Activated CD4-positive, alpha-beta T cell treated with anti-CD3 and anti-CD28 coated beads for 36 hours (primary cell): ENCODE measurements at regions of chrX and their contacts with region 1.

Region 1: DNA sequence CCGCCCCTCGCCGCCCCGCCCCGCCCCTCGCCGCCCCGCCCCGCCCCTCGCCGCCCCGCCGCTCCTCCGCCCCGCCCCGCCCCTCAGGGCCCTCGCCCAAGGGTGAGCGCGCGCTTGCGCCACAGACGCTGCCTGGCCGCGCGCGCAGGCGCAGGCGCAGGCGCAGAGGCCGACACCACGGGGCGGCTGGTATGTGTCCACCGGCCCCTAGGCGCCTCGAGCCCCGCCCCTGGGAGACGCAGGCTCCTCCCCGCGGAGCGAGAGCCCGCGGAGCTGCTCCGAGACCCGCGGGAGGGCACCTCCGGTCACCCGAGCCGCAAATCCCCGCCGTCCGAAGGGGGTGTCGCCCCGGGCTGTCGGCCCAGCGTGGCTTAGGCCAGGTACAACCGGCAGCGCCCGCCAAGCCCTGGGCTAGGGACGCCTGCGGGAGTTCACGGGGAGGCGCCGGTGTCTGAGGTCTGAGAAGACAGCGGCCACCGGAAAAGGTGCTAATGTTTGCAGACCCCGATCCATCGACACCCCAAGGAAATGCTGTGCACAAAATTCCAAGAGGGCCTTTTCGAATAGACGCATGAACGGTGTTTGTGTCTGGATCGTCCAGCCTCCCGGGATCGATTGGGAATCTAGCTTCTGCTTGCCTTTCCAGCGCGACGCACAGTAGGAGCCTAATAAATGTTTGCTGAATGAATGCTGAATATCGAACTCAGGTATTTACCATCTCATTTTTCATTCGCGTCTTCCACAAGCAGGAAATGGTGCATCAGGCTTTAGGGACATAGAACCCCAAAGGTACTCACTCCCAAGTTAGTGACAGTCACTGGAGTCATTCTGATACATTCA is 473 bp upstream of the CCNQ start:
- DNase-seq: peak; percentile 92
- ATAC-seq: peak; percentile 94
- H3K4me3 Mint-ChIP-seq: peak overlapping the region; percentile 81
- H3K27ac Mint-ChIP-seq: peak overlapping the region; percentile 72
- H3K4me1 Mint-ChIP-seq: peaks cover 35% of the 10 kb centered on the region
- H3K27me3 Mint-ChIP-seq: no peaks in the 10 kb centered on the region

Region 2: GRCh38 chrX:152958524-152959465 is 640.6 kb before region 1 on chrX:
- CTCF ChIA-PET with region 1: no interaction called
- POLR2A ChIA-PET with region 1: no interaction called
- intact Hi-C with region 1: loop called in 1 of 2 experiments (anchors 2 kb)
- DNase-seq: peak; percentile 91
- ATAC-seq: peak; percentile 98
- H3K4me3 Mint-ChIP-seq: peak overlapping the region; percentile 52
- H3K27ac Mint-ChIP-seq: peak overlapping the region; percentile 91
- H3K4me1 Mint-ChIP-seq: peaks cover 6% of the 10 kb centered on the region
- H3K27me3 Mint-ChIP-seq: no peaks in the 10 kb centered on the region

Region 3: DNA sequence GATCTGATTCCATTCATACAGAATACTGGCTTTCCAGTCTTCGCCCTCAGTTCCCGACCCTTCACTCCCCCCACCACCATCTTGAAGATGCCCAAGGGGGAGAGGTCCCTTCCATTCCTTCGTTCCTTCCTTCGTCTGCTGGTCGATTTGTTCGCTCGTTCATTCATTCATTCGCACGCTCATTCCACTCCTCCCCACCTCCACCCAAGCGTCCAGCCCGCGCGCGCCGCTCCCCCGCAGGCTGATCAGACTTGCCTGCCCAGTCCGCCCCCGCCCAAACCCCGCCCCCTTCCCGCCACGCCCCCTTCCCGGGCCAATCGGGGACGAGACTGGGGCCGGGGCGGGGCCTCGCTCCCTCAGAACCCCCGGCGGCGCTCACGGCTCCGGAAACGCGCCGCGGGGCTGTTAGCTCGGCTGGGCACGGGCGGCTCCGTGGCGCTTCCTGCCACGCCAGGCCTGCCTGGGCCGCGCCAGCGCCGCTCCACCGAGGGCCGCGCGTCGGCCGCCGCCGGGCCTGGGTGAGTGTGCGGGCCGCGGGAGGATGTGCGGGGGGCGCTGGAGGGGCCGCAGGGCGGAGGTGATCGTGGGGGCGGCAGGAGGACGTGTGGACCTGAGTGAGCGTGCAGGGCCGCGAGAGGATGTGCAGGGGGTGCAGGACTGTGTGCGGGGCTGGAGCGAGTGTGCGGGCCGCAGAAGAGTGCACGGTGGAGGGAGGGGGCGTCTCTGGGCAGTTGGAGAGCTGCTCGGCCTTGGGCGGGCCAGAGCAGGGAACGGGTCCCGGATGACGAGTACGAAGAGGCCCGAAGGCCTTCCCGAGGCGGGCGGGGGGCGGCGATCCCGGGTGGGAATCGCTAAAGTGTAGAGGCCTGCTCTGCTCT is 265.4 kb before region 1 on chrX and contains the start of gene ZNF275:
- CTCF ChIA-PET with region 1: interaction called, 3 read pairs
- POLR2A ChIA-PET with region 1: no interaction called
- intact Hi-C with region 1: loop called in 1 of 2 experiments (anchors 5 kb)
- DNase-seq: peak; percentile 87
- ATAC-seq: peak; percentile 93
- H3K4me3 Mint-ChIP-seq: peak within 1 kb of the TSS; percentile 80
- H3K27ac Mint-ChIP-seq: peak within 1 kb of the TSS; percentile 81
- H3K4me1 Mint-ChIP-seq: peaks cover 45% of the 10 kb centered on the region
- H3K27me3 Mint-ChIP-seq: no peaks in the 10 kb centered on the region
- total RNA-seq, gene ZNF275: 11.5 to 13.4 TPM

Region 4: GRCh38 chrX:153582896-153583295 is 16.5 kb before region 1 on chrX:
- CTCF ChIA-PET with region 1: interaction called, 5 read pairs
- POLR2A ChIA-PET with region 1: interaction called, 5 read pairs
- intact Hi-C with region 1: loop called (anchors 1 to 2 kb)
- DNase-seq: peak; percentile 81
- ATAC-seq: peak; percentile 100
- H3K4me3 Mint-ChIP-seq: peak overlapping the region; percentile 10
- H3K27ac Mint-ChIP-seq: peak overlapping the region; percentile 51
- H3K4me1 Mint-ChIP-seq: peaks cover 19% of the 10 kb centered on the region
- H3K27me3 Mint-ChIP-seq: no peaks in the 10 kb centered on the region

Region 5: GRCh38 chrX:153609917-153610428 is 10.6 kb after region 1 on chrX:
- CTCF ChIA-PET with region 1: interaction called, 18 read pairs
- POLR2A ChIA-PET with region 1: interaction called, 5 read pairs
- intact Hi-C with region 1: loop called in 1 of 2 experiments (anchors 1 kb)
- DNase-seq: peak; percentile 85
- ATAC-seq: peak; percentile 91
- H3K4me3 Mint-ChIP-seq: peak overlapping the region; percentile 62
- H3K27ac Mint-ChIP-seq: peak overlapping the region; percentile 73
- H3K4me1 Mint-ChIP-seq: peaks cover 13% of the 10 kb centered on the region
- H3K27me3 Mint-ChIP-seq: no peaks in the 10 kb centered on the region

Region 6: GRCh38 chrX:153724252-153725040 is 125.0 kb after region 1 on chrX and contains the starts of genes ABCD1 and BCAP31:
- CTCF ChIA-PET with region 1: no interaction called
- POLR2A ChIA-PET with region 1: no interaction called
- intact Hi-C with region 1: loop called in 1 of 2 experiments (anchors 1 kb)
- DNase-seq: peak; percentile 93
- ATAC-seq: peak; percentile 84
- H3K4me3 Mint-ChIP-seq: peak within 1 kb of the TSS; percentile 89
- H3K27ac Mint-ChIP-seq: peak within 1 kb of the TSS; percentile 87
- H3K4me1 Mint-ChIP-seq: peaks cover 20% of the 10 kb centered on the region
- H3K27me3 Mint-ChIP-seq: no peaks in the 10 kb centered on the region
- total RNA-seq, gene ABCD1: 4.5 to 4.8 TPM
- total RNA-seq, gene BCAP31: 78.0 to 106 TPM

Region 7: DNA sequence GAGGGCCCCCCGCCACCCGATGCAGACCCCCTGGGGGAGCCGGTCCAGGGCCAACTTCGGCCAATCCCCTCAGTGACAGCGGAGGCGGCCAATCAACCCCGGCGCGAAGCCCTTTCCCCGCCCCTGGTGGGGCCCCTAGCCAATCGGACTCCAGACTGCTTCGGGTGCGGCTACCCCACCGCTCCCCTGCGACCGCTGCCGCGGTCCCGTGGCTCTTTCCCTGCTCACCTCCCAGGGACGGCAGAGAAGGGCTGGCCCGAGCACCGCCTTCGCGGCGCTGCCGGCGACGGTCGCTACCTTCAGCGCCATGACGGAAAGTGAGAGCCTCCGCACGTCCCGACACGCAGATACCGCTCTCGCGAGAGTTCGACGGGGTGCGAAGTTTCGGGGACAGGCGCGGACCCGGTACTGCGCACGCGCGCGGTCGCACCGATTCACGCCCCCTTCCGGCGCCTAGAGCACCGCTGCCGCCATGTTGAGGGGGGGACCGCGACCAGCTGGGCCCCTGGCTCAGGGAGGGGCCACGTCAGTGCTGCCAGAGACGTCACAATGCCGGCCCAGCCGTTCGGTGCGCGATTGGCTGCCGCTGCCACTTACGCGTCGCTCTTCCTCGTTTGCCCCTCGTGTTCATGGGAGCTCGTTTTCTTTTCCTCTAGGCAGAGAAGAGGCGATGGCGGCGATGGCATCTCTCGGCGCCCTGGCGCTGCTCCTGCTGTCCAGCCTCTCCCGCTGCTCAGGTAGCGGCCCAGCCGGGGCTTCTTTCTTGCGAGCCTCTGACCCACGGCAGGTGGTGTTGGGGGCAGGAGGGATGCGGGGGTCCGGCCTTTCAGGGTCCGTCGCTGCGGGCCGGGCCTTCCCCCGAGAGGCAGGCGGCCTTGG is 194.8 kb after region 1 on chrX and contains the starts of genes IDH3G and SSR4:
- CTCF ChIA-PET with region 1: no interaction called
- POLR2A ChIA-PET with region 1: no interaction called
- intact Hi-C with region 1: loop called in 1 of 2 experiments (anchors 1 kb)
- DNase-seq: peak; percentile 96
- ATAC-seq: peak; percentile 97
- H3K4me3 Mint-ChIP-seq: peak within 1 kb of the TSS; percentile 93
- H3K27ac Mint-ChIP-seq: peak within 1 kb of the TSS; percentile 93
- H3K4me1 Mint-ChIP-seq: peaks cover 21% of the 10 kb centered on the region
- H3K27me3 Mint-ChIP-seq: no peaks in the 10 kb centered on the region
- total RNA-seq, gene IDH3G: 48.8 to 62.4 TPM
- total RNA-seq, gene SSR4: 124 to 146 TPM